HEK293T (cell line): ENCODE measurements at regions of chr16 and their contacts with region 1.

Region 1: DNA sequence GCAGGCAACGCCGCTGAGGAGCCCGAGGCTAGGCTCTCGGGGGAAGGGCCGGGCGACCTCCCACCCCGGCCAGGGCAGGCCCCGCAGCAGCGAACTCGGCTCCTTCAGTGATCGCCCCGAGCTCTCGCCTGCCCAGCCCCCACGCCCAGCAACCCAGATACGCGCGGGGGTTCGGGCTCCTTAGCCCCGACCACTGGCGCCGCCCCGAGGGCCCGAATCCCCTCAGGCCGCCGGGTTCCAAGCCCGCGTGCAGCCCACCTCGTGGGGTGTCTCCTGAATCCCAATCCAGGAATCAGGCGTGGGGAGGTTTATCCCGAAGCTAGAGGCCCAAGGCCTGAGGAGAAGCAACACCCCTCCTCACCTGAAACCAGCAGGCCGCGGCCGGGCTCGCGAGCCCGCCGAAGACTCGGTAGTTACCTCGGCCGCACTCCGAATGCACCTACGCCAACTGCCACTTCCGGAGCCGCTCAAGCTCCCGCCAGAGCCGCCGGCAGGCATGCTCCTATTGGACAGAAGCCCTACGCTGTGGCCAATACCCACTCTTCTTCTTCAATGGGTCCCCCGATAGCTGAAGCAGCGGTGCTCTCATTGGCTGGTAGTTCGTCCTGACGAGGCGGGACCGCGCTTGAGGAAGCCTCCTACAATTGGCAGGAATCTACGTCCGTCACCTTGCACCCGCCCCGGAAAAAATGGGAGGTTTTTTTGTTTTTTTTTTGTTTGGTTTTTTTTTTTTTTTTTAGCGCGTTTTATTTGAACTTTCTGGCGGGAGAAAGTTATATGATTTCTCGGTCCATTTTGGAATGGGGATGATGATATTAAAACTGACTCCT is at the start of gene RFWD3:
- DNase-seq: peak; percentile 99

Region 2: GRCh38 chr16:74695450-74696422 is 29.1 kb after region 1 on chr16:
- CTCF ChIA-PET with region 1: no interaction called
- POLR2A ChIA-PET with region 1: interaction called, 10 read pairs
- DNase-seq: peak; percentile 93